ENCODE measurements at regions of chr10 and their contacts with region 1.

Region 1: DNA sequence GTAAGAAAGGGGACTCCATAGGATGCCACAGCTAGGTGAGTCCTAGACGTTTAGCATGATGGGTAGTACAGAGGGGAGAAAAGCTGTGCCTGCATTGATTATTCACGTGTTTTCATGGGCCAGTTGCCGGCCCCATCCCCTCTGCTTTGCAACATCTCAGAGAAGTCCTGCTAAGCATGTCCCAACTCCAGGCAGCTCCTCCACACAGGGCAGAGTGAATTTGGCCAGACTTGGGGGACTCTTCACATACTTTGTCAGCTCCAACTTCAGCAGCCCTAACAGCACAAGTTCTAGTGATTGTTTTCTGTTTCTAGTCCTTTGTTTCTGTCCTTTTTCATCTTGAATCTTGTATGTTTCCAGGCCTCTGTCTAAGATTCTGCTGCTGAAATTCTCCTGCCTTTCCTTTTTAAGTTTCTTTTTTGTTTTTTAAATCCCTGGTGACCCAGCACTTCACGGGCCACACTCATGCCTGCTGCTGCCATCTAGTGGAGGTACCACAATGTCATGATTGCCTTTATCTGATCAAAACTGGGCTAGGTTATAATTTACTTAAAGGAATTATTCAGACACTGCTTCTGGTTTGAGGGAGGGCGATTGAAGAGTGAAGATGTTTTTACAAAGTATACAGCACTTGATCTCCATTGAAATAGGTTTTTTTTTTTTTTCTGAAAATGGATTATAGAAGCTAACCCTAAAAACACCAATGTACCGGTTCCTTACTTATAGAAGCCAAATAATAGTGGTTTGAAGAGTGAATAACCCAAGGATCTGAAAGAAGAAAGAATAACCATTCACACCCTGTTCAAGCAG is 276.9 kb downstream of the CSTF2T start:
- DNase-seq: peak; percentile 7 to 67
- H3K4me3 ChIP-seq: no peak overlapping the region
- H3K27ac ChIP-seq: no peak overlapping the region
- H3K4me1 ChIP-seq: peaks cover 0 to 3% (median 1%) of the 10 kb centered on the region in 4 experiments; a peak in 3 of 7 replicates
- H3K27me3 ChIP-seq: no peaks in the 10 kb centered on the region
- CTCF ChIP-seq: peak; percentile 65 to 73 (median 73)
- EP300 ChIP-seq: no peak
- POLR2A ChIP-seq: no peak
- RAD21 ChIP-seq: peak; percentile 79 to 82

Region 2: GRCh38 chr10:51301644-51302043 is 120.9 kb before region 1 on chr10:
- CTCF ChIA-PET with region 1: no interaction called
- POLR2A ChIA-PET with region 1: no interaction called
- DNase-seq: no peak
- H3K4me3 ChIP-seq: no peak overlapping the region
- H3K27ac ChIP-seq: no peak overlapping the region
- H3K4me1 ChIP-seq: peaks cover 0 to 2% (median under 1%) of the 10 kb centered on the region in 4 experiments; a peak in 3 of 7 replicates
- H3K27me3 ChIP-seq: no peaks in the 10 kb centered on the region
- CTCF ChIP-seq: no peak
- EP300 ChIP-seq: no peak
- POLR2A ChIP-seq: no peak
- RAD21 ChIP-seq: no peak

Region 3: GRCh38 chr10:51358227-51358626 is 64.3 kb before region 1 on chr10:
- CTCF ChIA-PET with region 1: no interaction called
- POLR2A ChIA-PET with region 1: no interaction called
- DNase-seq: no peak
- H3K4me3 ChIP-seq: no peak overlapping the region
- H3K27ac ChIP-seq: no peak overlapping the region
- H3K4me1 ChIP-seq: no peaks in the 10 kb centered on the region
- H3K27me3 ChIP-seq: no peaks in the 10 kb centered on the region
- CTCF ChIP-seq: no peak
- EP300 ChIP-seq: no peak
- POLR2A ChIP-seq: no peak
- RAD21 ChIP-seq: no peak

Region 4: GRCh38 chr10:51405580-51406351 is 16.8 kb before region 1 on chr10:
- CTCF ChIA-PET with region 1: interaction called, 18 read pairs
- POLR2A ChIA-PET with region 1: interaction called, 3 read pairs
- DNase-seq: no peak
- H3K4me3 ChIP-seq: no peak overlapping the region
- H3K27ac ChIP-seq: no peak overlapping the region
- H3K4me1 ChIP-seq: peaks cover 2 to 6% (median 4%) of the 10 kb centered on the region in 4 experiments; a peak in 4 of 7 replicates
- H3K27me3 ChIP-seq: no peaks in the 10 kb centered on the region
- CTCF ChIP-seq: no peak
- EP300 ChIP-seq: no peak
- POLR2A ChIP-seq: no peak
- RAD21 ChIP-seq: no peak

Region 5: DNA sequence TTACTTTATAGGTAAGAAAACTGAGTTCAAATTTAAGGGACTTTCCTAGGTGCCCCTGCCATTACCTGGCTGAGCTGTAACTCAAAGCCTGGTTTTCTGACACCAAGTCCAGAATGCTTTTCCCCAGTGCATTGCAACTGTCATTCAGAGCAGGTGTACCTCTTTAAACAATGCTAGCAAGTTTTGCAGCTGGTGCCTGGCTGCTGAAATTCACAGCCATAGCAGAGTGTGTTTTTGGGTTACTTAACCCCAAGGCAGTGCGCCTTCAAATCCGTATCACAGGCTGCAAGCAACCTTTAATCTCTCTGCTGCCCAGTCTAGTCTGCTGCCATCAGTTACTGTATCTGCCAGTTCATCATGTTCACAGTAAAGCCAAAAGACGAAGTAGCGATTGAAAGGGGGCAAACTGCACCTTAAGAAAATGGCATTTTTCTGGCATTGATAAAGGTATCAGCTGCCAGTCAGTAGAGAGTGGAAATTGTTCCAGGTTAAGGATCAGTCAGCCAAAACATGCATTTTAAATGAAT is 11.5 kb after region 1 on chr10:
- CTCF ChIA-PET with region 1: interaction called, 18 read pairs
- POLR2A ChIA-PET with region 1: no interaction called
- DNase-seq: no peak
- H3K4me3 ChIP-seq: no peak overlapping the region
- H3K27ac ChIP-seq: no peak overlapping the region
- H3K4me1 ChIP-seq: peaks cover 0 to 5% (median 1%) of the 10 kb centered on the region in 4 experiments; a peak in 2 of 7 replicates
- H3K27me3 ChIP-seq: no peaks in the 10 kb centered on the region
- CTCF ChIP-seq: no peak
- EP300 ChIP-seq: no peak
- POLR2A ChIP-seq: no peak
- RAD21 ChIP-seq: no peak

Region 6: DNA sequence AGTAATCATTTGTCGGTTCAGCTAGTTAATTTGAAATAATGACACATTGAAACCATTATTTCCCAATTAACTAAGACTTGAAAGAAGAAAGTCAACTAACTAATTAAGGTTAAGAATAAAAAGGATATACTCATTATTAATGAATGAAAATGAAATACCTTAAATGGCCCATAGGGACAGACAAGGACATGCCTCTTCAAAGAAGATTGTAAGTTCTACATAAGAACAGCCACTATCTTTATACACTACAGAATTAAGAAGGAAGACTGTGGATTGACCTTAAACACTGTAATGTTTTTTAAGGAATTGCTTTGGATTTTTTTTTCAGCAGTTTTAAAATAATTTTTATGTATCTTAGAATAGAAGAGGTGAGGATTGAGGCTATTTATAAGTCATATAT is 216.2 kb after region 1 on chr10:
- CTCF ChIA-PET with region 1: no interaction called
- POLR2A ChIA-PET with region 1: no interaction called
- DNase-seq: no peak
- H3K4me3 ChIP-seq: no peak overlapping the region
- H3K27ac ChIP-seq: no peak overlapping the region
- H3K4me1 ChIP-seq: no peaks in the 10 kb centered on the region
- H3K27me3 ChIP-seq: no peaks in the 10 kb centered on the region
- CTCF ChIP-seq: no peak
- EP300 ChIP-seq: no peak
- POLR2A ChIP-seq: no peak
- RAD21 ChIP-seq: no peak